PC-3 (cell line): ENCODE measurements at regions of chr10 and their contacts with region 1.

Region 1: DNA sequence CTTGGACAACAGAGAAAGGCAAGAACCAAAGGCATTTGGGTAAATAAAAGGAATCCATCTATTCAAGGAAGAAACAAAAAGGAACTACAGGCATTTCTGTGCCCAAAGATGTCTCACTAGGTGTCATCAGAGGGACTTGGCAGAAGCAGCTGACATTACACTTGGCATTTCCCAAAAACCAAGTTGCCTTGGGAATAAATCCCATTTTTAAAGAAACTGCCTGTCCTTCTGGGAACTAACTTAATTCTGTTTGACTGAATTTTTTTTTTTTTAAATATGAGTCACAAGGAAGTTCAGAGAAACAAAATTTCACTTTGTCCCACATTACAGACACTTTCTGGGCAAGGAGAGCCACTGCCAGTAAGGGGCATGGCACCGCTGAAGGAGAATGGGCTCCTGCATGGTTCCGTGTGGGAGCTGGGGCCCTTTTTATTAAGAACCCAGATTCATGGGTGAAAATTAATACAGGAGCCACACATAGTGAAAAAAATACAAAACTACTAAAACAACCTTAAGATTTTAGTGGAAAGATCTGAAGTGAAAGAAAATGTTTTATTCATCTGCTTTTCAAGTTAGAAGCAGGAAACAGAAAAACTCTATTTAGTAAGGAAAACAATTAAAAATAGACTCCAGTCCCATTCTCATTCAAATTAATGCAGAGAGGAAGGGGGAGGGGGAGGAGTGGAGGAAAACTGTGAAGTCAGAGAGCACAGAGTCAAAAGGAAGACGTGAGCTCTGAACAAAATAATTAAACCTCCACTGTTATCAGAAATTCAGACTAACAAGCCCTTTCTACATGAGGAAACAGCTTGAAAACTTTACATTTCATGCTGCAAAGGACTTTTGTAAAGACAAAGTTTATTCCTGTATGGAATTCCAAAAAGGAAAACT is 118.4 kb upstream of the PDLIM1 start:
- DNase-seq: peak; percentile 66
- ATAC-seq: peak; percentile 55
- H3K4me3 ChIP-seq: peak overlapping the region; percentile 59
- H3K27ac ChIP-seq: peak overlapping the region; percentile 100
- H3K4me1 ChIP-seq: peaks cover 49% of the 10 kb centered on the region
- H3K27me3 ChIP-seq: no peaks in the 10 kb centered on the region
- CTCF ChIP-seq: no peak

Region 2: DNA sequence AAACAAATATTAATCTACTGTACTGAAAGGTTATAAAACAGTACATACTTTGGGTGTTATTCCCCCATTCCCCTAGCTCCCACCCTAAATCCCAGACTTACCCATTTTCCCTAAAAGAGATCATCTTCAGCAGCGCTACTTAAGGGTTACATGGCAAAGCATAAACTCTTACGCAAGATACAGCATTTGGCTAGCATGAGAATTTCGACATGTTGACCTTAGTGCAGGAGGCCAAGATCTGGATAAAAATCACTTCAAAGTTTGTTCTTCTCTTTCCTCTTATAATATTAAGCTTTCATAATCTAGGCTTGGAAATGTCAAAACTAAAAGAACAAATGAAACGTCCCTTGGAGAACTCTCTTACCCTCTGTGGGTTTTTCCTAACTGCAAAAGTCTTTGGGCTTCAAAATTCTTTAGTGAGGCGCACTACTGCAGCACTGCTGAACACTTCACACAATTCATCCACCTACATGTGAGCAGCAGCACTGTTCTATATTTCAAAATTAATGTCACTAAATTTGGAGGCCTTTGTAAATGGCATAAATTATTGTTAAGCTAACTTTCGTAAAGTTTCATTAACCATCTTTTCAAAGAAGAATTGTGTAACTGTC is 58.9 kb before region 1 on chr10:
- CTCF ChIA-PET with region 1: interaction called, 21 read pairs
- POLR2A ChIA-PET with region 1: no interaction called
- intact Hi-C with region 1: no loop called
- DNase-seq: no peak
- ATAC-seq: no peak
- H3K4me3 ChIP-seq: no peak overlapping the region
- H3K27ac ChIP-seq: no peak overlapping the region
- H3K4me1 ChIP-seq: no peaks in the 10 kb centered on the region
- H3K27me3 ChIP-seq: no peaks in the 10 kb centered on the region
- CTCF ChIP-seq: no peak

Region 3: DNA sequence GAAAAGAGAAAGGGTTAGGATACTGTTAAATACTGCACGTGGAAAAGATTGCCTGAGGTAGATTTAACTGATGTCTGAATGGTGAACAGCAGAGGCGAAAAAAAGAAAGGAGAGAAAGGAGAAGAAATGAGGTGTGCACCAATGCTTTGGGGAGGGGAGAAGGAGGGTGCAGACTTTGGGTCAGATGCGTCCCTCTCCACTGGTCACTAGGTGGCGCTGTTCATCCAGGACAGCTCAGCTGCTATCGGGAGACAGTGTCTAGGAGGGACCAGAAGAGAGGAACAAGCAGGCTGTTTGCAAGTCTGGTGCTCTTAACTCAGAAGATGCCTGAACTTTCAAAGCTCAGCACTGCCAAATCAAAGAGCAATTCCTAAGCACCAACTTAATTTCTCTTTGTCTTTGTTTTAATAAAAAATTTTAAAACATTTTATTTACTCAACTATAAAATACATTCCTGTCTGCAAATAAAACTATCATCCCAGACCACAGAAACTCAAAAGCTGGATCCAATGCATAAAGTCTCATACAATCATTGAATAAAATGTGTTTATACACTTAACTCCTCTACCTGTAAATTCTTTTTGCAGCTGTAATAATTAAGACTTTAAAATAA is 34.5 kb before region 1 on chr10:
- CTCF ChIA-PET with region 1: interaction called, 4 read pairs
- POLR2A ChIA-PET with region 1: no interaction called
- intact Hi-C with region 1: loop called (anchors 2 kb)
- DNase-seq: peak; percentile 82
- ATAC-seq: peak; percentile 99
- H3K4me3 ChIP-seq: no peak overlapping the region
- H3K27ac ChIP-seq: no peak overlapping the region
- H3K4me1 ChIP-seq: no peaks in the 10 kb centered on the region
- H3K27me3 ChIP-seq: no peaks in the 10 kb centered on the region
- CTCF ChIP-seq: peak; percentile 86

Region 4: DNA sequence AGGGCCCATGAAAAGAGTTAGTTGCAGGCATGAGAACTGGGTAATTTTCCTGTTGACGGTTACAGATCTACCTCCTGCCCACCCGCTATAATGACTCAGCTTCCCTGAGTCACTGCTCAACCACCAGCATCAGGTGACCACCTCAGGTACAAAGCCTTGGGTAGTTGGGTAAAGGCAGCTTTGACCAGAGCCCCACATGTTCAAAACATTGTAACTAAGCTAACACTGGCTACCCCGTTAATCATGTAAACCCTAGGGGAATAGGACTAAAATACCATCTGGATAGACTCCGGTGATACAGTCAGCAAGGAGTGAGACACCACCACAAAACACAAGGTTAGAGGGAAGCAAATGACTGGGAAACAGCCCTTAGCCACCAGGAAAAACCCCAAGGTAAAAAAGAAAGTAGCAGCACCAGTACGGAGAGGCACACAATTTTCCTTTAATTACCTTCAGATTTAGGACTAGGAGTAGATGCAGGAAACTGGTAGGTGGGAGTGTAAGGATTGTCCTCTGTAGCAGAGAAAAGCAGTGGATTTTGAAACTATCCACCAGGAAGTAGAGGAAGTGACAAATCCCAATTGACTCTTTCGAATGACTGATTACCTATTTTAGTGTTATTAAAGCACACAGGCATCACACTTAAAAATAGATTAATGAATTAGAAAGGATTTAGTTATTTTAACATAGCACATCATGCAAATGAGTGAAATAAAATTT is 14.9 kb before region 1 on chr10:
- CTCF ChIA-PET with region 1: no interaction called
- POLR2A ChIA-PET with region 1: interaction called, 4 read pairs
- intact Hi-C with region 1: loop called (anchors 2 kb)
- DNase-seq: peak; percentile 87
- ATAC-seq: peak; percentile 90
- H3K4me3 ChIP-seq: peak overlapping the region; percentile 65
- H3K27ac ChIP-seq: peak overlapping the region; percentile 98
- H3K4me1 ChIP-seq: peaks cover 30% of the 10 kb centered on the region
- H3K27me3 ChIP-seq: no peaks in the 10 kb centered on the region
- CTCF ChIP-seq: no peak

Region 5: GRCh38 chr10:95430231-95430951 is 21.2 kb after region 1 on chr10:
- CTCF ChIA-PET with region 1: interaction called, 26 read pairs
- POLR2A ChIA-PET with region 1: no interaction called
- intact Hi-C with region 1: no loop called
- DNase-seq: peak; percentile 75
- ATAC-seq: peak; percentile 95
- H3K4me3 ChIP-seq: peak overlapping the region; percentile 34
- H3K27ac ChIP-seq: peak overlapping the region; percentile 21
- H3K4me1 ChIP-seq: peaks cover 10% of the 10 kb centered on the region
- H3K27me3 ChIP-seq: no peaks in the 10 kb centered on the region
- CTCF ChIP-seq: peak; percentile 90